ENCODE measurements at regions of chr2 and their contacts with region 1.

Region 1: GRCh38 chr2:6139916-6140315 is 447.7 kb downstream of the SOX11 start:
- DNase-seq: no peak
- H3K4me3 ChIP-seq: no peak overlapping the region
- H3K27ac ChIP-seq: no peak overlapping the region
- H3K4me1 ChIP-seq: no peaks in the 10 kb centered on the region
- H3K27me3 ChIP-seq: no peaks in the 10 kb centered on the region
- CTCF ChIP-seq: no peak

Region 2: GRCh38 chr2:5894355-5894754 is 245.6 kb before region 1 on chr2:
- CTCF ChIA-PET with region 1: no interaction called
- POLR2A ChIA-PET with region 1: no interaction called
- intact Hi-C with region 1: no loop called
- DNase-seq: no peak
- H3K4me3 ChIP-seq: no peak overlapping the region
- H3K27ac ChIP-seq: no peak overlapping the region
- H3K4me1 ChIP-seq: no peaks in the 10 kb centered on the region
- H3K27me3 ChIP-seq: no peaks in the 10 kb centered on the region
- CTCF ChIP-seq: no peak

Region 3: GRCh38 chr2:6031200-6031867 is 108.6 kb before region 1 on chr2:
- CTCF ChIA-PET with region 1: no interaction called
- POLR2A ChIA-PET with region 1: no interaction called
- intact Hi-C with region 1: no loop called
- DNase-seq: no peak
- H3K4me3 ChIP-seq: no peak overlapping the region
- H3K27ac ChIP-seq: no peak overlapping the region
- H3K4me1 ChIP-seq: no peaks in the 10 kb centered on the region
- H3K27me3 ChIP-seq: 0 out of 2 replicates have a peak, but pooled peaks cover 7% of the 10 kb centered on the region
- CTCF ChIP-seq: no peak

Region 4: GRCh38 chr2:6127718-6128117 is 12.2 kb before region 1 on chr2:
- CTCF ChIA-PET with region 1: no interaction called
- POLR2A ChIA-PET with region 1: no interaction called
- intact Hi-C with region 1: loop called (anchors 1 kb)
- DNase-seq: no peak
- H3K4me3 ChIP-seq: no peak overlapping the region
- H3K27ac ChIP-seq: no peak overlapping the region
- H3K4me1 ChIP-seq: no peaks in the 10 kb centered on the region
- H3K27me3 ChIP-seq: no peaks in the 10 kb centered on the region
- CTCF ChIP-seq: no peak

Region 5: DNA sequence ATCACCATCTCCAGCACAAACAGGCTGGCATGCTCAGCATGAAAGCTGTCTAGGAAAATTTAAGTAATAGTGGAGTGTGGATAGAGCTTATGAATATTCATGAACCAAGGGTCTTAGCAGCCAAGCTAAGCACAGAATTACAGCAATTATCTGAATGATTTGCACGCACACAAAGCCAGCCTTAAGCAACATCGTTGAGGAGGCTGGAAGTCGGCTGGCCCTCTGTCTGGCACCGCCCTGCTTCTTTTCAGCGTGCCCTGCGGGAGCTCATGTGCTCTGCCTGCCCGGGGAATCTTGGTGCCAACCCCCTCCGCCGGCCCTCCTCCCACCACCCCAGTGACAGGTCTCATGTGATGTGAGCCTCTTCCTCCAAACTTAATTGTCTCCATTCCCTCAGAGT is 185.7 kb after region 1 on chr2:
- CTCF ChIA-PET with region 1: no interaction called
- POLR2A ChIA-PET with region 1: no interaction called
- intact Hi-C with region 1: no loop called
- DNase-seq: no peak
- H3K4me3 ChIP-seq: no peak overlapping the region
- H3K27ac ChIP-seq: no peak overlapping the region
- H3K4me1 ChIP-seq: no peaks in the 10 kb centered on the region
- H3K27me3 ChIP-seq: no peaks in the 10 kb centered on the region; the same call in 1 of the 2 replicates
- CTCF ChIP-seq: no peak